GM10248 (cell line): ENCODE measurements at regions of chr2 and their contacts with region 1.

Region 1: GRCh38 chr2:178112202-178113152 is at the start of gene RBM45:
- DNase-seq: peak; percentile 91
- CTCF ChIP-seq: peak; percentile 91

Region 2: DNA sequence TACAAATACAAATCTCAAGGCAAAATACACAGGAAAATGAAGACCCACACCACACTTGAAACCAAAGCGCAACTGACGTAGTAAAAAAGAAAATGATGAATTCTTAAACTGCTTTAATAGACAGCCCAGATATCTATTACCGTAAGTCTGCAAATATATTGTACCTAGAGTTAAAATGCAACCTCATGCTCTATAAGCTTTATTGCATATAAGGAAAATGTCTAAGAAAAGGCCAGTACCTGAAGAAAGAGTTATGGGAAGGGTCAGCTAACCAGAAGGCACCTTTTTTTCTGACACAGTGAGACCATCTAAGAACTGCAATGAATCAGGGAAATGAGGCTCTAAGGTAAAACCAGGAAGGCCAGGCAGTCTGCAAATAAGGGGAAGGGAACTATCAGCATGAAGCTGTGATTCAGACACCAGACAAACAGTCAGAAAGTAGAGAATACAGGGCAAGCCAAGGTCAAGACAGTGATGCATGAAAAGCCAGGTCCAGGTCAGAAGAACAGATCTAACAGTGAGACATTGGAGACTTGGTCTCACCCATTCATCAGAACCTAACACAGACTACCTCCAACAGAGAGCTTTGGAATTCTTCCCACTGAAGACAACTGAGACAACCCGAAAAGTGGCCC is 86.8 kb before region 1 on chr2:
- CTCF ChIA-PET with region 1: no interaction called
- POLR2A ChIA-PET with region 1: no interaction called
- DNase-seq: no peak
- CTCF ChIP-seq: no peak

Region 3: GRCh38 chr2:178128836-178129630 is 16.6 kb after region 1 on chr2:
- CTCF ChIA-PET with region 1: interaction called, 33 read pairs
- POLR2A ChIA-PET with region 1: interaction called, 3 read pairs
- DNase-seq: no peak
- CTCF ChIP-seq: no peak

Region 4: GRCh38 chr2:178136321-178137025 is 24.0 kb after region 1 on chr2:
- CTCF ChIA-PET with region 1: interaction called, 33 read pairs
- POLR2A ChIA-PET with region 1: no interaction called
- DNase-seq: no peak
- CTCF ChIP-seq: no peak

Region 5: DNA sequence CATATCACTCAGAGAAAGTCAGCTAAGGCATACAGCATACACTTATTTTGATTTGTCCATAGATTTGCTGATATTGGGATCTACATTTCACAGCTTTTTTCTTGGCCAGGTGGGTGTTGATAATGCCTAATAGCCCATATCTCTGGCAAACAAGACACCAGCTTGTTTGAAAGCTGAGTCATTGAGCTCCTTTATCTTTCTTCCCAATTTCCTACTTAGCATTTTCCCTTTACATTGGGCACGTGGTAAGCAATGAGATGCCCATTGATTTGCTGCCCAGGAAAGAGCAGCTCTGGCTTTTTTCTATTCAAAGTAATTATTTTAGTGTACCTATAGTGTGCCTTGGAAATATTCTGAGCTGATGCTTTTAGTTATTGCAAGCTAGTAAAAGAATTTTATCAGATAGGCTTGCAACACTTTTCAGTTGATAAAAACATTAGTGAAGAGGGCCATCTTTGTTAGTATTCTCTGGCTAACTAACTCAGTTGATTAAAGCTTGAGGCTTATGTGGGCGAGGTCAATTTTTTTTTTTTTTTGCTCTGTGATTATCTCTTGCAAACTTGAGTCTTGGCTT is 161.4 kb after region 1 on chr2:
- CTCF ChIA-PET with region 1: interaction called, 25 read pairs
- POLR2A ChIA-PET with region 1: no interaction called
- DNase-seq: no peak
- CTCF ChIP-seq: no peak

Region 6: DNA sequence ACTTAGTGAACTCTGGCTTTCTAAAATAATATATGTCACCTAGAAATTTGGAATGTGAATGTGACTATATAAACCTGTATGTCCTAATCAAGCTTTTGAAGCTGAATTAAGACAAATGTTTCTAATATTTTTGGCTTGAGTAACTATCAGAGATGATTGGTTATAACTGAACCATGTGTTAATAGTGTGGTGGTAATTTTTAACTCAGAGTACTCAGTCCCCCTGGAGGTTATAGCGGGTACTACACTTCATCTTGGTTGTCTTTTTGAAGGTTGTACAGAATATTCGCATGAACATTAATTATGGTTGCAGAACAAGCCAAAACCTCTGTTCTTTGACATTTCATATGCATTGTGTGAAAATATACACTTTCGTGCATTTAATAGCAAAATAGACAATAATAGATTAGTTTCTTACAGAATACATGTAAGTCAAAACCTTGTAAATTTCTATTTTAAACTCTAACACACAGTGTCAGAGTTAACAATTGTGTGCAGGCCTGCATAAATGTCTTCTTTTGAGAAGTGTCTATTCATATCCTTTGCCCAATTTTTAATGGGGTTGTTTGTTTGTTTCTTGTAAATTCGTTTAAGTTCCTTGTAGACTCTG is 167.9 kb after region 1 on chr2:
- CTCF ChIA-PET with region 1: interaction called, 25 read pairs
- POLR2A ChIA-PET with region 1: no interaction called
- DNase-seq: peak; percentile 43
- CTCF ChIP-seq: peak; percentile 65